Endothelial cell of umbilical vein (primary cell): ENCODE measurements at regions of chr14 and their contacts with region 1.

Region 1: DNA sequence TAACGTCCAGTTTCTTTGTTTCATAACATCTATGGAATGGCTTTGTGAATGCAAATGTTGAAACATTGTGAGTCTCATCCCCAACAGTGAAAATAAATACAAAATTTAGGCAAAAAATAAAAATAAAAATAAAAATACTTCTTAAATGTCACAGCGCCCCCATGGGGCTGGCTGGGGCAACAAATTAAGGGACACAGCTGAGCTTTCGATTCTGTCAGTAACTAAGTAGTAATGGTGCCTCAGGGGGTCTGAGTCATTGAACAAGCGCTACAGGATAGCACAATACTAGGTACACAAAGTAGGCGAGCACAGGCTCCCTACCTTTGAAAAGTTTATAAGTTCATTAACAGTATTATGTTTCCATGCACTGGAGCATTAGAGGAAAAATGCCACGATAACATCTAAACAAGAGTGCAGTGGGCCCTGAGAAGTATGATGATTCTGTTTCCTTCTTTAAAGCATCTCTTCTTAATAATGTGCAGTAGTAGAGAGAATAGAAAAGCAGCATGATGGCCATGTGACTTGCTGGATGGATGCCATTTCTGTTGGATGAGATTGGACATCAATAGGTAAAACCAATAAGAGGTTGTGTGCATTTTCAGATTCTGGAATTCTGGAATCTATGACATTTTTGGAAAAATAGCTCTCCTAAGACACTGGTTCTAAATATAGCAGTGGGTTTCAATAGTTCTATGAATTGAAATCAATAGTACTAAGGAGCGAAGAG is 667.2 kb downstream of the DIO2 start:
- DNase-seq: peak; percentile 10
- H3K4me3 ChIP-seq: no peak overlapping the region
- H3K27ac ChIP-seq: no peak overlapping the region
- H3K4me1 ChIP-seq: no peaks in the 10 kb centered on the region
- H3K27me3 ChIP-seq: no peaks in the 10 kb centered on the region
- CTCF ChIP-seq: peak; percentile 15 to 26
- POLR2A ChIP-seq: no peak

Region 2: DNA sequence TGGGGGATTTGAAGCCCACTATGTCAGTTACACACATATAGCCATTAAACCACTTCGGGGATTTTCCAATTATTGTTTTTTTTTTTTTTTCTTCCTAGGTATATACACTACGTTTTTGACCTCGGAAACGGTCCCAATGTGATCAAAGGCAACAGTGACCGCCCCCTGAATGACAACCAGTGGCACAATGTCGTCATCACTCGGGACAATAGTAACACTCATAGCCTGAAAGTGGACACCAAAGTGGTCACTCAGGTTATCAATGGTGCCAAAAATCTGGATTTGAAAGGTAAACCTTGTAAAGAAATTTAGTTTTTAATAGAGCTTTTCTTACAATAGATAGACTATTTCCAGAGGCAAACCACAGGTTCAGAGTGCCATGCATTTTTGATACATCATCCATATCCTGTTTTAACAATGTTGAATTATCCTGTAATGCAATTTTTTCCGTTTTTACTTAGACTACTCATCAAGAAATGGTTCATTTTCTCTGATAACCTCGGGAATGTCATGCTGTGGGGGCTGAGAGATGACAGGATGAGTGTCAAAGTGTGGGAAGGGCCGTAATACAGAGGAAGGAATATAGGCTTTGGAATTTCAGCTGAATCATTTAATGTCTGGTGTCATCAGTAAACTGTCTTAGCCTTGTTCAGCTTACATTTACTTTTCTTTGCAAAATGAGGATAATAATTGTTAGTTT is 576.9 kb before region 1 on chr14:
- CTCF ChIA-PET with region 1: interaction called, 22 read pairs
- POLR2A ChIA-PET with region 1: no interaction called
- dilution Hi-C with region 1: no loop called
- intact Hi-C with region 1: no loop called
- DNase-seq: peak; percentile 56
- H3K4me3 ChIP-seq: no peak overlapping the region
- H3K27ac ChIP-seq: peak overlapping the region; percentile 60
- H3K4me1 ChIP-seq: peaks cover 33% of the 10 kb centered on the region
- H3K27me3 ChIP-seq: no peaks in the 10 kb centered on the region
- CTCF ChIP-seq: no peak
- POLR2A ChIP-seq: no peak

Region 3: GRCh38 chr14:79091381-79091963 is 452.7 kb before region 1 on chr14:
- CTCF ChIA-PET with region 1: interaction called, 11 read pairs
- POLR2A ChIA-PET with region 1: no interaction called
- dilution Hi-C with region 1: no loop called
- intact Hi-C with region 1: no loop called
- DNase-seq: no peak
- H3K4me3 ChIP-seq: no peak overlapping the region
- H3K27ac ChIP-seq: no peak overlapping the region
- H3K4me1 ChIP-seq: no peaks in the 10 kb centered on the region
- H3K27me3 ChIP-seq: no peaks in the 10 kb centered on the region
- CTCF ChIP-seq: no peak
- POLR2A ChIP-seq: no peak

Region 4: GRCh38 chr14:79332504-79333197 is 211.5 kb before region 1 on chr14:
- CTCF ChIA-PET with region 1: no interaction called
- POLR2A ChIA-PET with region 1: no interaction called
- dilution Hi-C with region 1: no loop called
- intact Hi-C with region 1: no loop called
- DNase-seq: no peak
- H3K4me3 ChIP-seq: no peak overlapping the region
- H3K27ac ChIP-seq: no peak overlapping the region
- H3K4me1 ChIP-seq: no peaks in the 10 kb centered on the region
- H3K27me3 ChIP-seq: peaks cover 0 to 1% of the 10 kb centered on the region in 2 experiments
- CTCF ChIP-seq: no peak
- POLR2A ChIP-seq: no peak

Region 5: DNA sequence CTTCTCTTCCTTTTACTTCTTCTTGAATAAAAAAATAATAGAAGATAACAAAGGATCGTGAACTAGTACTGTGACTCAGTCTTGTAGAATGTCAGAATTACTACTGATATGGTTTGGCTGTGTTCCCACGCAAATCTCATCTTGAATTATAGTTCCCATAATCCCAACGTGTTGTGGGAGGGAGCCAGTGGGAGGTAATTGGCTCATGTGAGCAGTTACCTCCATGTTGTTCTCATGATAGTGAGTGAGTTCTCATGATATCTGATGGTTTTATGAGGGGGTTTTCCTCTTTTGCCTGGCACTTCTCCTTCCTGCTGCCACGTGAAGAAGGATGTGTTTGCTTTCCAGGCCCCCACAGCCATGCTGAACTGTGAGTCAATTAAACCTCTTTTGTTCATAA is 117.6 kb after region 1 on chr14:
- CTCF ChIA-PET with region 1: no interaction called
- POLR2A ChIA-PET with region 1: no interaction called
- dilution Hi-C with region 1: no loop called
- intact Hi-C with region 1: no loop called
- DNase-seq: peak; percentile 2
- H3K4me3 ChIP-seq: no peak overlapping the region
- H3K27ac ChIP-seq: no peak overlapping the region
- H3K4me1 ChIP-seq: no peaks in the 10 kb centered on the region
- H3K27me3 ChIP-seq: no peaks in the 10 kb centered on the region
- CTCF ChIP-seq: no peak
- POLR2A ChIP-seq: no peak